Endothelial cell of umbilical vein (primary cell): ENCODE measurements at regions of chr10 and their contacts with region 1.

Region 1: DNA sequence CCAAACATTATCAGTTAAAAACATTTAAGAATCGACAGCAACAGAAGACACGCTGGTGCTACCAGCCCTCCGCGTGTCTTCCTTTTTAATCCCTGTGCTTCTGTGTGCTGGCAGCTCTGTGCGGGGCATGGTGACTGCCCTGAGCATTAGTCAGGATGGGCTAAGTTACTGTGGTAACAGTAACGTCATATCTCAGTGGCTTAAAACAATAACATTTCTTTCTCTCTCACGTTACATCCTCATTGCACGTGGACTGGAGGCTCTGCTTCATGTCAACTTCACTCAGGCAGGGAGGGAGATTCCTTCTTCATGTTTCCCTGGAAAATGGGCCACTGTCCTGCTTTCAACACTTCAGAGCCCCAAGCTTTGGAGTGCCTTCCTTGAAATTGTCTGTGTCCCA is 378.5 kb downstream of the CCSER2 start:
- DNase-seq: no peak
- H3K4me3 ChIP-seq: no peak overlapping the region
- H3K27ac ChIP-seq: no peak overlapping the region
- H3K4me1 ChIP-seq: no peaks in the 10 kb centered on the region
- H3K27me3 ChIP-seq: no peaks in the 10 kb centered on the region
- CTCF ChIP-seq: no peak
- POLR2A ChIP-seq: no peak

Region 2: DNA sequence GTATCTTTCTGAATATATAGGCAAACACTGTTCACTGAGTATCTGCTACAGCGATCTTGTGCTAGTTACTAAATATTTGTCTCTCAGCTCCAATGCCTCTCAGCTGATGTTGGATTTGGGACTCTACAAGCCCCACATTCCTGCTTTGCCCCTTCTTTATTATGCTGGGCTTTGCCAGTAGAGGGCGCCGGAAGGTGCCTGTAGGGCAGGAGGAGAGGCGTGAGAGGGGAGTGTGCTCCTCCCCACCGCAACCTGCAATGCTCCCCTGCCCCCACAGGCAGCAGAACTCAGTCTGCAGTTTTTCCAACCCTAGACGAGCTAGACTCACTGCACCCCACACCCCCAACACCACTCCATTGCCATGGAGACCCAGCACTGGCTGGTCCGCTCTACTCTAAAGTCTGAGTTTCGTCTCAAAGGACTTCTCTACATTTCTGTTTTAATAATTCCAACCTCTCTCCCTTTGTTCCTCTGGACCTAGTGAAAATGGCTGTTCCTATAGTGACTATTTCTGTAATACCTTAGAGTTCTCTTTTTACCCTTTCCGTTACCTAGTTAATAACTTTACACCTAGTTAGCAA is 40.9 kb before region 1 on chr10:
- CTCF ChIA-PET with region 1: no interaction called
- POLR2A ChIA-PET with region 1: no interaction called
- dilution Hi-C with region 1: no loop called
- intact Hi-C with region 1: loop called (anchors 2 kb)
- DNase-seq: no peak
- H3K4me3 ChIP-seq: no peak overlapping the region
- H3K27ac ChIP-seq: no peak overlapping the region
- H3K4me1 ChIP-seq: no peaks in the 10 kb centered on the region
- H3K27me3 ChIP-seq: no peaks in the 10 kb centered on the region
- CTCF ChIP-seq: peak; percentile 30 to 31
- POLR2A ChIP-seq: no peak